HepG2 (cell line): ENCODE measurements at regions of chr16 and their contacts with region 1.

Region 1: GRCh38 chr16:11632464-11632939 is 35.8 kb upstream of the SNN start:
- DNase-seq: peak; percentile 63
- ATAC-seq: peak; percentile 72
- H3K4me3 ChIP-seq: peak overlapping the region; percentile 41 to 70 (median 52)
- H3K27ac ChIP-seq: no peak overlapping the region
- H3K4me1 ChIP-seq: peaks cover 64% of the 10 kb centered on the region
- H3K27me3 ChIP-seq: peaks cover 0 to 13% of the 10 kb centered on the region in 2 experiments; a peak in 2 of 5 replicates
- CTCF ChIP-seq: no peak
- EP300 ChIP-seq: no peak
- POLR2A ChIP-seq: peak in 1 of 2 experiments; percentile 71; a peak in 1 of 4 replicates
- RAD21 ChIP-seq: 0 out of 2 replicates have a peak, but pooled peaks have one; percentile 21

Region 2: GRCh38 chr16:11560701-11561449 is 71.6 kb before region 1 on chr16:
- CTCF ChIA-PET with region 1: no interaction called
- POLR2A ChIA-PET with region 1: no interaction called
- in situ Hi-C with region 1: no loop called
- intact Hi-C with region 1: no loop called
- DNase-seq: no peak
- ATAC-seq: no peak
- H3K4me3 ChIP-seq: no peak overlapping the region
- H3K27ac ChIP-seq: peak overlapping the region; percentile 15
- H3K4me1 ChIP-seq: peaks cover 64% of the 10 kb centered on the region
- H3K27me3 ChIP-seq: no peaks in the 10 kb centered on the region
- CTCF ChIP-seq: no peak
- EP300 ChIP-seq: no peak
- POLR2A ChIP-seq: no peak
- RAD21 ChIP-seq: no peak

Region 3: GRCh38 chr16:11597239-11598101 is 35.0 kb before region 1 on chr16:
- CTCF ChIA-PET with region 1: no interaction called
- POLR2A ChIA-PET with region 1: interaction called, 4 read pairs
- in situ Hi-C with region 1: no loop called
- intact Hi-C with region 1: loop called (anchors 2 kb)
- DNase-seq: no peak
- ATAC-seq: peak; percentile 84
- H3K4me3 ChIP-seq: peak overlapping the region; percentile 17 to 67 (median 29); a peak in 5 of 6 replicates
- H3K27ac ChIP-seq: no peak overlapping the region
- H3K4me1 ChIP-seq: peaks cover 65% of the 10 kb centered on the region
- H3K27me3 ChIP-seq: peaks cover 9 to 58% of the 10 kb centered on the region in 2 experiments
- CTCF ChIP-seq: peak; percentile 53
- EP300 ChIP-seq: no peak
- POLR2A ChIP-seq: no peak
- RAD21 ChIP-seq: no peak

Region 4: DNA sequence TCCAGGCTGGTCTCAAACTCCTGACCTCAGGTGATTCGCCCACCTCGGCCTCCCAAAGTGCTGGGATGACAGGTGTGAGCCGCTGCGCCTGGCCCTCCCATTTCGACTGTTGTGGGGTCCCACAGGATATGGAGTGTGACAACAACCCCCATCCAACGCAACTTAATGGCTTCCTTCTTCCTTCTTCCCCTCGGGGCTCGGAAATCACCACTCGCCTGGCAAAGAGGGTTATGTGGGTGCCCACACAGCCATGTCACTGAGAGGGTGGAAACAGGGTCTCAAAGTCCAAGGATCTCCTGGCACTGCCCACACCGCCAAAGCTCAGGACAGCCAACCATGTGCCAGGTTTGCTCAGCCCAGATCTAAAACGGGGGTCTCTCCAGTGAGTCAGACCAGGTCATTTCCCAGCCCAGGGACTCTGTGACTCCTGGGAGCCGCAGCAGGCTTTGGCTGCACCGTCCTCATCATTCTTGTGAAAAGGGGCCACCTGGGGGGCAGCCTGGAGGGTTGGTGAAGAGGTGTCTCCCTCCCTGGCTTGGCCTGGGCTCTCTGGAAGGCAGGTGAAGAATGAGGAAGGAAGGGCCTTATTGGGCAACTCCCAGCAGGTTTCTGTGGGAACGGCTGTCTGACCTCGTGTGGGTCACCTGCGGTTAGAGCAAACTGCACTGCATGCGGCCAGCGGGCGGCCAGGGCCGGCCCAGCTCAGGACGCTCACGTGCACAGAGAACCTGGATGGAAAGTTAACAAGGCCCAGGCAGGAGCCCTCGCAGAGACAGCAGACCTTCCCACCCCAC is 20.4 kb before region 1 on chr16:
- CTCF ChIA-PET with region 1: no interaction called
- POLR2A ChIA-PET with region 1: interaction called, 4 read pairs
- in situ Hi-C with region 1: no loop called
- intact Hi-C with region 1: loop called (anchors 1 kb)
- DNase-seq: peak; percentile 83
- ATAC-seq: peak; percentile 88
- H3K4me3 ChIP-seq: peak overlapping the region in 2 of 3 experiments; percentile 9 to 41; a peak in 3 of 6 replicates
- H3K27ac ChIP-seq: no peak overlapping the region
- H3K4me1 ChIP-seq: peaks cover 43% of the 10 kb centered on the region
- H3K27me3 ChIP-seq: peaks cover 10 to 32% of the 10 kb centered on the region in 2 experiments
- CTCF ChIP-seq: peak; percentile 30
- EP300 ChIP-seq: peak; percentile 78 to 79; a peak in 1 of 4 replicates
- POLR2A ChIP-seq: no peak
- RAD21 ChIP-seq: 0 out of 2 replicates have a peak, but pooled peaks have one; percentile 19

Region 5: GRCh38 chr16:11651796-11652195 is 19.3 kb after region 1 on chr16:
- CTCF ChIA-PET with region 1: no interaction called
- POLR2A ChIA-PET with region 1: no interaction called
- in situ Hi-C with region 1: no loop called
- intact Hi-C with region 1: no loop called
- DNase-seq: no peak
- ATAC-seq: no peak
- H3K4me3 ChIP-seq: no peak overlapping the region
- H3K27ac ChIP-seq: no peak overlapping the region
- H3K4me1 ChIP-seq: peaks cover 11% of the 10 kb centered on the region
- H3K27me3 ChIP-seq: peaks cover 2 to 36% of the 10 kb centered on the region in 2 experiments; a peak in 3 of 5 replicates
- CTCF ChIP-seq: no peak
- EP300 ChIP-seq: no peak
- POLR2A ChIP-seq: no peak
- RAD21 ChIP-seq: no peak